Panc1 (cell line): ENCODE measurements at regions of chr19 and their contacts with region 1.

Region 1: GRCh38 chr19:2636897-2637683 is 65.4 kb downstream of the GNG7 start:
- DNase-seq: no peak
- ATAC-seq: peak; percentile 73
- H3K4me3 ChIP-seq: peak overlapping the region in 1 of 2 experiments; percentile 16; a peak in 1 of 4 replicates
- H3K27ac ChIP-seq: no peak overlapping the region
- H3K4me1 ChIP-seq: peaks cover 8% of the 10 kb centered on the region
- H3K27me3 ChIP-seq: no peaks in the 10 kb centered on the region
- CTCF ChIP-seq: peak; percentile 92

Region 2: GRCh38 chr19:2618611-2619010 is 18.5 kb before region 1 on chr19:
- CTCF ChIA-PET with region 1: interaction called, 10 read pairs
- POLR2A ChIA-PET with region 1: no interaction called
- in situ Hi-C with region 1: no loop called
- intact Hi-C with region 1: no loop called
- DNase-seq: no peak
- ATAC-seq: peak; percentile 63; the same call in 1 of the 2 replicates
- H3K4me3 ChIP-seq: no peak overlapping the region
- H3K27ac ChIP-seq: peak overlapping the region; percentile 68
- H3K4me1 ChIP-seq: peaks cover 24% of the 10 kb centered on the region
- H3K27me3 ChIP-seq: no peaks in the 10 kb centered on the region
- CTCF ChIP-seq: no peak

Region 3: GRCh38 chr19:2827840-2828489 is 190.9 kb after region 1 on chr19:
- CTCF ChIA-PET with region 1: no interaction called
- POLR2A ChIA-PET with region 1: no interaction called
- in situ Hi-C with region 1: no loop called
- intact Hi-C with region 1: no loop called
- DNase-seq: no peak
- ATAC-seq: no peak
- H3K4me3 ChIP-seq: no peak overlapping the region
- H3K27ac ChIP-seq: no peak overlapping the region
- H3K4me1 ChIP-seq: no peaks in the 10 kb centered on the region
- H3K27me3 ChIP-seq: no peaks in the 10 kb centered on the region
- CTCF ChIP-seq: no peak